ENCODE measurements at regions of chr20 and their contacts with region 1.

Region 1: GRCh38 chr20:407133-407952 is 756 bp upstream of the RBCK1 start:
- DNase-seq: peak; percentile 83

Region 2: GRCh38 chr20:478949-479429 is 71.6 kb after region 1 on chr20:
- intact Hi-C with region 1: loop called (anchors 5 kb)
- DNase-seq: no peak